ENCODE measurements at regions of chr1 and their contacts with region 1.

Region 1: DNA sequence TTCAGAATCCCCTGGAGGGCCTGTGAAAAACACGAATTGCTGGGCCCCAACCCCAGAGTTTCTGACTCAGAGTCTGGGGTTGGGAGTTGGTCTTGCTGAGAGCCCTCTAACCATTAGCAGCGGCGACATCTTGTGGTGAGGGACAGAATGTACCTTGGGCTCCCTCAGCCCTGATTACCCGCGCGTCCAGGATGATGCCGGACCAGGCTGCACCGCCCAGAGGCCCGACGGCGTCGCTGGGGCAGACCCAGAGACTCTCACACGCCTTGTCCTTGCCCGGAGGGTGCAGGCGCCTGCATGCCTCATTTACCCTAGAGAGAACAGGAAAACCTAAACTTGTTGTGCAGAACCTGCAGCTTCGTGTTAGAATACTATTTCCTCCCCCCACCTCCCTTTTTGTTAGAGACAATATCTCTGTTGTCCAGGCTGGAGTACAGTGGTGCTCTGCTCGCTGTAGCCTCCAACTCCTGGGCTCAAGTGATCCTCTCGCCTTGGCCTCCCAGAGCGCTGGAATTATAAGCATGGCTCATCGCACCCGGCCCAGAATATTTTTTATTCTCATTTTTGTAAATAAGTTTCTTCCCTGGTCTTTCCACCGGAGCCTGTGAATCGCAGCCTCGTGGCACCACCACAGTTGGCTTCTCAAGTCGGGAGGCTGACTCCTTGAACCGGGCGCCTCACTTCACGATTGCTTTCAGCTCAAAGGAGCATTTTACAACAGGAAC is 22.2 kb upstream of the RD3 start:
- DNase-seq: peak; percentile 59
- ATAC-seq: peak; percentile 71
- H3K4me3 Mint-ChIP-seq: peak overlapping the region; percentile 78
- H3K27ac Mint-ChIP-seq: peak overlapping the region; percentile 51
- H3K4me1 Mint-ChIP-seq: peaks cover 43% of the 10 kb centered on the region
- H3K27me3 Mint-ChIP-seq: peaks cover 6% of the 10 kb centered on the region
- CTCF ChIP-seq: no peak

Region 2: DNA sequence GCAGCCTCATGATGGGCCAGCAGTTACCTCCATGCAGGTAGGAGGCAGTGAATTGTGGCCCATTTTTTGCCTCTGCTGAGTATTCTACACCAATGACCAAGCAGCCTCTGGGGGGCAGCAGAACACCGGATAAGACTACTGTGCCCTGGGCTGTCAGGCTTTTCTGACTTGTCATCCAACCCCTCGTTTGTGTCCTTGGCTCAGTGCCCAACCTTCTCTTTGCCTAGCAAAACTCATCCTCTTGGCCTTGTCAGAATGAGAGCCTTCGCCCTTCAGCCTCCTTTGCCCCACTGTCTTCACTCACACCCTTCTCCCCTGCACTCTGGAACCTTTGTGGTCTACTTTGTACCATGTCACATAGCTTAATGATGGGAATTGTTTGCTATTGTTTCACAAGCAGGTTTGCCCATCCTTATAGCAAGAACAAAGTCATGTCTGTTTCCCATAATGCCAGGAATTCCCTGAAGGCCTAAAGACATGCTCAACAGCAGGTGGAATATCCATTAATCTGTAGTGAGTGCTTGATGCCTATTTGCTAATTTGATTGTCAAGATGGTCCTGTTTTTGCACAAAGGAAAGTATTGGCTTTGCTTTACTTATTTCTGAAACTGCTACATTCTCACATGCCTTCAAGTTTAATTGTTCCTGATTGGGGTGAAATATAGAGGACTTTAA is 929.6 kb before region 1 on chr1:
- CTCF ChIA-PET with region 1: no interaction called
- POLR2A ChIA-PET with region 1: no interaction called
- intact Hi-C with region 1: loop called (anchors 1 kb)
- DNase-seq: peak; percentile 34
- ATAC-seq: peak; percentile 37
- H3K4me3 Mint-ChIP-seq: no peak overlapping the region
- H3K27ac Mint-ChIP-seq: no peak overlapping the region
- H3K4me1 Mint-ChIP-seq: peaks cover 10% of the 10 kb centered on the region
- H3K27me3 Mint-ChIP-seq: no peaks in the 10 kb centered on the region
- CTCF ChIP-seq: no peak

Region 3: GRCh38 chr1:211382714-211383480 is 131.3 kb before region 1 on chr1:
- CTCF ChIA-PET with region 1: no interaction called
- POLR2A ChIA-PET with region 1: interaction called, 4 read pairs
- intact Hi-C with region 1: loop called (anchors 5 kb)
- DNase-seq: peak; percentile 86
- ATAC-seq: peak; percentile 96
- H3K4me3 Mint-ChIP-seq: peak overlapping the region; percentile 93
- H3K27ac Mint-ChIP-seq: peak overlapping the region; percentile 98
- H3K4me1 Mint-ChIP-seq: peaks cover 20% of the 10 kb centered on the region
- H3K27me3 Mint-ChIP-seq: no peaks in the 10 kb centered on the region
- CTCF ChIP-seq: no peak

Region 4: DNA sequence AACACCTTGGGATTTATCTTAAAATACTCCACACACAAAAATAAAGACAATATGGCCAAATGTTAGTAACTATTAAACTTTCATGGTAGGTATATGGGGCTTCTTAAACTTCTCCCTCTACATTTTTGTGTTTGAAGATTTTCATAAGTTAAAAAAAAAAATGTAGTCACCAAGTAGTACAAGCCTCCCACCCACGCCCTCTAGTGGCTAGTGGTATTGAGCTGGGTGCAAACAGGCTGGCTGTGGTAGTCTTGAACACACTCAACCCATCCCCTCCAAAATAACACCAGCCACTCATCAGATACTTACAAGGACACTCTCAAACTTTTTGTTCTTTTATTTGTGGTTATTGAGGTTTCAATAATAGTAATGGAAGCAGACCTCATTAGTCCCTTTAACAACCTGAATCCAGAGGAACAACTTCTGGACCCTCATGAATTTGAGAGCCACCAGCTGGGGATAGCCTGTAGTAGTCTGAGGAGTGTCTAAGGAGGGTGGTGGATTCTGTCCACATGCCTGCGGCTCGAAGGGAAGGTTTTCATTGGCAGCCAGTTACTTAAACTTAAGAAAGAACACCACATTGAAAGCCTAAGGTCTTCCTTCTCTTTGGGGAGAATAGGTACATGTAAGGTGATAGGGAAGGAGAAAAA is 37.9 kb before region 1 on chr1:
- CTCF ChIA-PET with region 1: interaction called, 33 read pairs
- POLR2A ChIA-PET with region 1: no interaction called
- intact Hi-C with region 1: loop called (anchors 2 kb)
- DNase-seq: peak; percentile 39
- ATAC-seq: peak; percentile 72
- H3K4me3 Mint-ChIP-seq: no peak overlapping the region
- H3K27ac Mint-ChIP-seq: no peak overlapping the region
- H3K4me1 Mint-ChIP-seq: peaks cover 2% of the 10 kb centered on the region
- H3K27me3 Mint-ChIP-seq: peaks cover 27% of the 10 kb centered on the region
- CTCF ChIP-seq: peak; percentile 56

Region 5: DNA sequence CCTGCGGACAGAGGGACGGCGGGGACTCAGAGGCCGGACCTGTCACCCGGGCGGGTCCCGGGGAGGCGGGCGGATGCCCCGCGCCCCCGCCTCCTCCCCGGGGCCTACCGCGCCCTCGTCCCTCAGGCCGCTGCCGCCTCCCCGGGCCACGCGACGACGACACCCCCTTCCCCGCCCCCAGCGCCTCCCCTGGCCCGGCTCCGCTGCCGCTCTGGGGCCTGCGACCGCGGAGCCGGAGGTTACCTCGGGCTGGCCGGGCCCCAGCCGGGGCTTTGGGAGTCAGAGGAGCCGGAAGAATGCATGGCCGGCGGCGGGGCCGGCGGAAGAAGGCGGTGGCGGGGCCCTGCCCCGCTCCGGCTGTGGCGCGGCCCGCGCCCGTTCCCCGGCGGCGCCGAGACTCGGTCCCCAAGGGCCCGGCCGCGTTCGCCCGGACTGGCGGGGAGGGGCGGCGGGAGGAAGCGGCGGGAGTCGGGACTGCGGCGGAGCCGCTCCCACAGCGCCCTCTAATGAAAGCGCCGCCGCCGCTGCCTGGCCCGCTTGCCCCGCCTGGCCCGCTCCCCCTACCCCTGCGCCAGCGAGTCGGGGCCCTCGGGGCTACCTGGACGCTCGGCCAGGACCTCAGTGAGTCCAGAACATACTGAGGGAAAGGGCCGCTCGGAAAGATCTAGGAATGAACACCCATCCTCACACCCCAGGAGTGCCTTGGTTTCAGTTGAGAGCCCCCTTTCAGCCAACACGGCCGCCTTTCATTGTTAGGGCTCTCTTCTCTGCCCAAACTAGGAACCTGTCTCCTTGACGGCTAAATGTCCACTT is 316.3 kb after region 1 on chr1 and contains the start of gene LPGAT1:
- CTCF ChIA-PET with region 1: no interaction called
- POLR2A ChIA-PET with region 1: no interaction called
- intact Hi-C with region 1: loop called (anchors 10 kb)
- DNase-seq: peak; percentile 78
- ATAC-seq: peak; percentile 86
- H3K4me3 Mint-ChIP-seq: peak within 1 kb of the TSS; percentile 95
- H3K27ac Mint-ChIP-seq: peak within 1 kb of the TSS; percentile 89
- H3K4me1 Mint-ChIP-seq: peaks cover 55% of the 10 kb centered on the region
- H3K27me3 Mint-ChIP-seq: no peaks in the 10 kb centered on the region
- CTCF ChIP-seq: no peak
- total RNA-seq, gene LPGAT1: 39.2 and 43.6 TPM in 2 replicates

Region 6: DNA sequence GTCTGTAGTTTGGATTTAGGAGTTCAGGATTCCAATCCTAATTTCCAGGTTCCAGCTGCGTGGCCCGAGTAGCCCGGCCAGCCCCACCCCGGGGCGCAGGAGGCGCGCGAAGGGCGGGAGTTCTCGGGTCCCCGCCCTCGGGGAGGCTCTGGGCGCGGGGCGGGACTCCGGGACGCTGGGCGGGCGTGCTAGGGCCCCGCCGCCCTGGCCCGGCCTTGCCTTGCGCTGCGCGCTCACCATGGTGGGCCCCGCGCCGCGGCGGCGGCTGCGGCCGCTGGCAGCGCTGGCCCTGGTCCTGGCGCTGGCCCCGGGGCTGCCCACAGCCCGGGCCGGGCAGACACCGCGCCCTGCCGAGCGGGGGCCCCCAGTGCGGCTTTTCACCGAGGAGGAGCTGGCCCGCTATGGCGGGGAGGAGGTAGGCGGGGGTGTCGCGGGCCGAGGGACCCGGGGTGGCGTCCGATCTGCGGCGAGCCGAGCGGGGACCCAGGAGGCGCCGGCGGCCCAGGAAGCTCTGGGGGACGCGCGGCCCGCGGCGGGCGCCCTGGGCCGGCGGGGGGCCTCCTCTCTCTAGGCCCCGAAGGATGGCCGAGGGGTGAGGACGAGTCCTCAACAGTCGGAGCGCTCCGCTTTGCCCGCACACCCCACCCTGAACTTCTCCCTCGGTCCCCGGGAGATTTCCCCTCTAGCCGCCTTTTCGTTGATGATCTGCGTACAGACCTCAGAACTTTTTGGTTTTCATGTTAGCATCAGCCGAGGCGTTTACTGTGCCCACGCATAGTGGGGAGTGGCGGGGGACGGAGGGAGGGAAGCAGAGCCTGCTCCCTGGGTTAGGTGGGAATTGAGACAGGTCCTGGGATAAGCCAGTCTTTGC is 918.7 kb after region 1 on chr1 and contains the start of gene NENF:
- CTCF ChIA-PET with region 1: no interaction called
- POLR2A ChIA-PET with region 1: no interaction called
- intact Hi-C with region 1: loop called (anchors 10 kb)
- DNase-seq: peak; percentile 80
- ATAC-seq: peak; percentile 99
- H3K4me3 Mint-ChIP-seq: peak within 1 kb of the TSS; percentile 78
- H3K27ac Mint-ChIP-seq: peak within 1 kb of the TSS; percentile 22
- H3K4me1 Mint-ChIP-seq: peaks cover 16% of the 10 kb centered on the region
- H3K27me3 Mint-ChIP-seq: no peaks in the 10 kb centered on the region
- CTCF ChIP-seq: no peak
- total RNA-seq, gene NENF: 24.1 and 26.4 TPM in 2 replicates